ENCODE measurements at regions of chr11 and their contacts with region 1.

Region 1: DNA sequence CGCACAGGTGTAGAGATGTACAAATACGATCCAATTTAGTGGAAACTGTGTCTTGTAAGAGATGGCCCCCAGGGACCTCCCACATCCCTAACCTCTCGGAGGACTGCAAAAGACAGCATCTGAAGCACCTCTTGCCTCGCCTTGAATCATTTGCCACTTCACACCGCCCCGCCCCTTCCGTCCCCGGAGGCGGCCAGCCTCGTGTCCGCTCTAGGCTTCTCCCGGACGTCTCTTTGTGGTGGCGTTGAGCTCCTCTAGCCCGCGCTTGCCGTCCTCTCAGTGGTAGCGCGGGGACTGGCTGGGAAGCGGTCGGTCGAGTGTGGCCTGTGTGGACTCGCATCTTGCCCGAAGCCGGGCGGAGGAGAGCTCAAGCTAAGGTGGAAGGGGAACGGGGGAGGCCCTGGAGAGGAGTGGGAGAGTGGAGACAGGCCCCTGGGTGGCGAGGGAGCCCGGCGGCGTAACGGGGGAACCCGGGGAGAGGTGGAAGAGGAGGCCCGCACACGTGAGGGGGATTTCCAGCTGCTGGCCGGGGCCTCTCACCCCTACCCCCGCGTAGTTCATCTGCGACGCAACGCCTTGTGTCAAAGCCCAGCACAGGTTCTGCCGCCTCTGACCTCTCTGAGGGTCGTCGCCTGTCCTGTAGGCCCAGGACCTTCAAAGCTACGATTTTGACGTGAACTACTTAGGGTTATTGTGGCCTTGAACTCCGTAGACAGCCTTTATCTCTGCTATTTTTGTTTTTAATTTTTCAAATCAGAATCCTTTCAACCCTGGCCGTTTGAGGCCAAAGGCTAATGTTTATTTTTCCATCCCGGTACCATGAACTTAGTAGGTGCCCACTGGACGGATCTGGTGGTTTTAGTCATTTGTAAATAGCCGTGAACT is at the start of gene ARL14EP:
- DNase-seq: peak; percentile 97
- H3K4me3 ChIP-seq: peak within 1 kb of the TSS; percentile 99
- H3K27ac ChIP-seq: peak within 1 kb of the TSS; percentile 71
- H3K4me1 ChIP-seq: peaks cover 33% of the 10 kb centered on the region
- H3K27me3 ChIP-seq: no peaks in the 10 kb centered on the region
- total RNA-seq, gene ARL14EP: 24.3 and 30.2 TPM in 2 replicates

Region 2: DNA sequence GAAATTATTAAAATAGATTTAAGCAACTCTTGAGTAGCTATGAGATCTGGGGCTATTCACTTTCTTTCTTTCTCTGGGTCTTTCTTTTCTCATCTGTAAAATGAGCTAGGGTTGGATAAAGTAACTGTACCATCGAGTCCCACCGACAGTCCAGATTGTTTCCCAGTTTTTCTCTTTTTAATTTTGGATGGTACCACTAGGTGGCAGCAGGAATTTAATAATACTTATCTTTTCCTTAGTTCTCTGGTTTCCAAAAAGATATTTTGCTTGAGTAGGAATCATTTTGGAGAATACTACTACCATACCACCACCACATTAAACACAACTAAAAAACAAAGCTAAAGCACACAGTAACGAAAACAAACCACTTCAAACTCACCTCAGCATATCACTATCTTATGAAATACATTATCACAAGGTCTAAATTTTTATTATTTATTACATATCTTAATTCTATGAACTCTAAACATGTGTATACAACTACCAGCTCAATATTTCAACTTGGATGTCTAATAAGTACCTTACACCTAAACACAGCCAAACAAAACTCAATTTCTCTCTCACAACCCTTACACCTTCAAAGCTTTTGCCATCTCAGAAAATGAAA is 890.2 kb before region 1 on chr11:
- in situ Hi-C with region 1: loop called (anchors 25 kb)
- DNase-seq: peak; percentile 43
- H3K4me3 ChIP-seq: no peak overlapping the region
- H3K27ac ChIP-seq: no peak overlapping the region
- H3K4me1 ChIP-seq: no peaks in the 10 kb centered on the region
- H3K27me3 ChIP-seq: no peaks in the 10 kb centered on the region

Region 3: GRCh38 chr11:30535818-30536217 is 212.8 kb after region 1 on chr11:
- in situ Hi-C with region 1: no loop called
- DNase-seq: no peak
- H3K4me3 ChIP-seq: no peak overlapping the region
- H3K27ac ChIP-seq: no peak overlapping the region
- H3K4me1 ChIP-seq: no peaks in the 10 kb centered on the region
- H3K27me3 ChIP-seq: no peaks in the 10 kb centered on the region

Measured in GM23248 (cell line).